ENCODE measurements at regions of chr1 and their contacts with region 1.

Region 1: DNA sequence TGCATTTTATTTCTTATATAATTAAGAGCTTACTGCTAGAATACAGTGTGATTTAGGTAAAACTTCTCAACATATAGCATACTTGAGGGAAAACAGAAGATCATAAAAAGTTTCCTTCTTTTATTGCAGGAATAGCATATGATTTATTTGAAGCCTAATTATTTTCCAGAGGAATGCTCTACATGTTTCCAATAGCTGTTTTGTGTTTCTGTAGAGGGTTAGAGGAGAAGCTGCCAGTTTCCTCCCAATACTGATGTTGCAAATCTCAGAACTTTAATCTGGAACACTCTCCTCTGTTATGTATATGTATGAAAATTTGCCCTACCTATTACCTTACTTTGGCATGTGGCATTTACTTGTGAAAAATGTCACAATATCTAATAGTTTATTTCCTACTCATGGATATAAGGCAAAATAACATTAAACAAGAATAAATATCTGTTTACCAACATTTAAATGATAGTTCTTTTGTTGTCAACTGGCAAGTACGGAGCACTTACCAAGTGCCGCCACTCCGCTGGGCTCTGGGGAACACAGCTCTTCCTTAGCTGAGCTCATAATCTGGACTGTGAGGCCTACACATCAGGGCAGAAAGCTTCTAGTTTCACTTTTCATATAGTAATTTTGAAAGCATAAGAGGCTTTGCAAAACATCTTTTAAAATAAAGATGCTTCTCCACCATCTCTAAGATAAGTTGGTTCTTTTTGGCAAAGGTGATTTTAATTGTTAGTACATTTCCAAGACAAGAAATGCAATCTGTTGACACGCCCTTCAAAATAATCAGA is 239.8 kb upstream of the C1orf105 start:
- DNase-seq: no peak

Region 2: GRCh38 chr1:172117800-172118199 is 62.9 kb before region 1 on chr1:
- intact Hi-C with region 1: no loop called
- DNase-seq: no peak

Region 3: DNA sequence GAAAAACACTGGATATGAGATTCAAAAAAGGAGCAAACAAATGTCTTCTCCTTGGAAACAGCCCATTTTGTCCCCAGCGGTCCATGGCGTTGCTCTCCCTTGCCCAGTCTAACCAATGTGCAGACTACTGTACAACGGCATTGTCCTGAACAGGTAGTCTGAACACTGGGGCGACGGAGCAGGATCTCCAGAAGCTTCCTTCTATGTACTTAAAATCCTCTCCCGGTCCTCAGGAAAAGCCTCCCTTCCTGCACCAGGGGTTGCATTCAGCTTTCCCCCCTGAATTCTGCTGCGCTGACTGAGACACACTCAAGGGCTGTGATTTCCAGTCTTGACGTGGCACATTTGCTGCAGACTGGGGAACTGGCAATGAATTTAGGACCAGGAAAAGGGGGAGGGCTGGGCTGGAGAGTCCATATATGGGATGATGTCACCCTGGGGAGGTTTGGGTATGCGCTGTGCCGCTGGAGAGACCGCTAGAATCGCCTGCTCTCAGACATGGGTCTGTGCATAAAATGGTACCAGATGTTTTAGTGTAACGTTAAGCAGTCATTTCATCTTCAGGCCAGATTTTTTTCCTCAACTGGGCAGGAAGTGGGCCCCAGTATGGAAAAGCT is 36.1 kb before region 1 on chr1:
- intact Hi-C with region 1: loop called (anchors 2 kb)
- DNase-seq: peak; percentile 81

Measured in cardiac septum (tissue), 1 donor.